Left colon (tissue), 2 donors: ENCODE measurements at regions of chr15 and their contacts with region 1.

Region 1: DNA sequence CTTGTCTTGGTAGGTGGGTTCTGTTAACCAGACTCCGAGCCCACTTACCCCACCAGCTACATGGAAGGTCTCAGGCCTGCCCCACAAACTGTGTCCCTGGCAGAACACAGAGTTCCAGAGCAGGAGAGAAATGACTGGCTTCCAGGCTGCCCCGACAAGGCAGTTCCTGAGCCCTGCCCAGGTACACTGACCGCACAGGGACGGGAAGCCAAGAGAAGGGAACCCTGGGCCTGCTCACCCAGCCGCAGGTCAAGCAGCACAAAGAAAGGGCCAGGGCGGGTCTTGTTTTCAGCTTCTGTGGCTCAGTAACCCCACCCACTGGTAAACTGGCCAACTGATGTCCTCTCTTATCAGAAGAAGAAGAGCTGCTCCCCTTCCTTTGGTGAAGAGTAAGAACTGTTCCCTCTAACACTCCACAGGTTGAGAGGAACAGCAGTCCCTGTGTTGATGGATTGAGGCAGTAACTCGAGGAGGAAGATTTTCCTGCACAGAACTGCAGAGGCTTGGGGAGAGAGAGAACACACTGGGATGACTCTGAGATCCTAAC is 68.4 kb downstream of the CRTC3 start:
- DNase-seq: peak; percentile 80 to 82
- ATAC-seq: peak; percentile 79

Region 2: GRCh38 chr15:90529371-90530249 is 68.5 kb before region 1 on chr15 and contains the start of gene CRTC3:
- intact Hi-C with region 1: loop called in 1 of 2 experiments (anchors 10 kb)
- DNase-seq: peak; percentile 38 to 64
- ATAC-seq: peak; percentile 89
- total RNA-seq, gene CRTC3: 23.0 to 23.1 TPM

Region 3: DNA sequence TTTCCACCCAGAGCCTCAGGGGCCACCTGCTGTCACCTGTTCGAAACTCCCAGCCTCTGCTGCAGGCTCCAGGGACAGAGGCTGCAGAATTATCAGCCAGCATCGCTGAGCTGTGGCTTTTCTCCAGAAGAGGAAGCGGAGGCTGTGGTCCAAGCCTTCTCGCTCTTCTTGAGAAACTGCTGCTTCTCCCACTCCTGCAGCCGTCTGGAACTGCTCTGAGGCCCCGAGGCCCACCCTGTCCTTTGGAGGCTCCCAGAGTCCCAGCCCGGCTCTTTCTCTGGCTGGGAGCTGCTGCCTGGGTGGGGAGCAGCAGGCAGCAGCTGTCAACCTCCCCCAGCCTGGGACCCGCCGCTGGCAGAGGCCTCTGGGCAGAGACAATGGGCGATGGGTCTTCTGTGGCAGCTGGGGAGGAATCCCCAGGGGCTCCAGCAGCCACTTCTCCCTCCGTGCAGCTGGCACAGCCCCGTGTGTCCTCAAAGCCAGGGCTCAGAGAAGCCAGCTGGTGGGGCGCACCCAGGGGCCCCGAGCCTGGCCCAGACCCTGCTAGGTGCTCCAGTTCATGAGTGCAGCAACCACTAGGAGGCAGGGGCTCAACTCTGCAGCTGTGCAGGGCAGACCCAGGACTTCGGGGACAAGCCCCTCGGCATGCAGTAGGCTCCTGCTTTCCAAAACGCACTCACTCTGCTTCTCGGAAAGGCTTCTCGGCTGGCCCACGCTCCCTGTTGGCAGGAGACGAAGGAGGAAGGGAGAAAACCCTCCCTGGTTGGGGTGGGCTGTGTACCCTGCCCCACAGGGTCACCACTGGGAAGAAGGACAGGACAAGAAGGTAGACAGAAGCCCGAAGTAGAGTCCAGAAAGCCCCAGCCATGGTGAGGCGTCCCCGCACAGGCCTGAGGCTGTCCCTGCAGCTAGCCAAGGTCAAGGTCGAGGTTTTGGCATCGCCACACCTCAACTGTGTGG is 220.4 kb after region 1 on chr15:
- intact Hi-C with region 1: no loop called
- DNase-seq: peak in 1 of 2 donors; percentile 32
- ATAC-seq: no peak